Transverse colon (tissue), 4 donors: ENCODE measurements at regions of chr15 and their contacts with region 1.

Region 1: DNA sequence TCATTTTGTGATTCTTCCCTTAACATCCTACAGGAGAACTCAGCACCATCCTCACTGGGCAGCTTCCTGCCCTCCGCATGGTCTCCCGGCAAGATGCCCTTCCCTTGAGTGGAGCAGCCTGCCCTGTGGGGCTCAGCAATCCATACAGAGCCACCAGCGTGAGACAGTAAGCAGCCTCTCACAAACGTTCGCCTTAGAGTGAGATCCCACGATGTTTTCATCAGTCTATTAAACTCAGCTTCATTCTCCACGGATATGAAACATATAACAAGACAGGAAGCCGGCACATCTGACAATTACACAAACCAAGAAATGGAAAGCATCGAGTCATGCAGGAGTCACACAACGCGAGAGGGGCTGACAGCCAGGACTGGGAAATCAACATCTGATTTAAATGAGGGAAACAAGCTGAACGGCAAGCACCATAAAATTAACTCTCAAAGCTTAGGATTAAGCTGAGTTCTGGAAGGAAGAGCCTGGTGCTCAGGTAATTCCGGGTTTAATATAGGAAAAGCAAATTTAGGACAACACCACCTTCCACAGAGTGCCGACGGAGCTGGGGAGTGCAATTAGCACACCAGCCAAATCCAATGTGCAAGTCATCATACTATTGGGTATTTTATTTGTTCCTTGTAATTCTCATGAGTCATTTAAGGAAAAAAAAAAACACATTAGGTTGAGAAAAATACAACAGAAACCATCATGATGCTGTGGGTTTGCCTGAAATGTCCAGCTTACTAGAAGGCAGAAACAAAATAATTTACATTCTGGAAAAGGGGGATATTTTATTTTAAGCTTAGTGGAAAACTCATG is 272.0 kb downstream of the OCA2 start:
- DNase-seq: no peak
- H3K4me3 ChIP-seq: no peak overlapping the region
- H3K27ac ChIP-seq: no peak overlapping the region
- H3K4me1 ChIP-seq: no peaks in the 10 kb centered on the region
- H3K27me3 ChIP-seq: no peaks in the 10 kb centered on the region
- CTCF ChIP-seq: no peak
- EP300 ChIP-seq: no peak
- POLR2A ChIP-seq: no peak

Region 2: GRCh38 chr15:27608248-27608647 is 218.9 kb before region 1 on chr15:
- in situ Hi-C with region 1: no loop called
- intact Hi-C with region 1: no loop called
- DNase-seq: no peak
- H3K4me3 ChIP-seq: no peak overlapping the region
- H3K27ac ChIP-seq: no peak overlapping the region
- H3K4me1 ChIP-seq: no peaks in the 10 kb centered on the region
- H3K27me3 ChIP-seq: no peaks in the 10 kb centered on the region
- CTCF ChIP-seq: no peak
- EP300 ChIP-seq: no peak
- POLR2A ChIP-seq: no peak

Region 3: DNA sequence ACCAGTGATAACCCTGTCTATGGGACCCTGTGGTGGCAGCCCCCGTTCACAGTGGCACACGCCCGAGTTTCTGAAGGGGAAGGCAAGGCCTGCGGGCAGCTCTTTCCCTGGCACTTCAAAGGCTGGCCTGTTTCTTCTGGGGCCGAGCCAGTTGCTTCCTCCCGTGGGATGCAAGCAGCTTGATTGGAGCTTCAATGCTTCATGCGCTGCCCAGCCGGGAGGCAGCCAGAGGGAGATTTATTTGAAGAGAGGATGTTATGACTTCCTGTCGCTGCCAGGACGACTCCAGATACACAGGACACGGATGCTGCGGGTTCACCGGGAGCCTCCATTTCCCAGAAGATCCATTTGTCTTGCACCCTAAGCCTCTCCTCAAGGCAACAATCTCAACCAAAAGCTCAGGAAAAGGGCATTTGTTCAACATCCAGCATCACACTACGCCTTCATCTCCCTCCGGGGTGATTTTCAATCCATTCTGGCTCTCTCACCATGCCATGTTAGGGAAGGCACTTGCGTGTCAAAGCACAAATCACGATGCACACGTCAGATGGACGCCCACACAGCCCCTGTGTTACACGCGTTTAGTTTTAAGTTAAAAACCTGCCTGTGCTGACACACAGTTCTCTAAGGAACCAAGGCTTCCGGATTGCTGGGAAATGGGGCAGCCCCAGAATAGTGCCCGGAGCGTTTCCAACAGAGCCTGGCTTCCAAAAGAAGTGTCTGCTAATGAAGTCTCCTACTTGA is 58.2 kb before region 1 on chr15:
- in situ Hi-C with region 1: no loop called
- intact Hi-C with region 1: loop called (anchors 10 kb)
- DNase-seq: no peak
- H3K4me3 ChIP-seq: no peak overlapping the region
- H3K27ac ChIP-seq: no peak overlapping the region
- H3K4me1 ChIP-seq: no peaks in the 10 kb centered on the region
- H3K27me3 ChIP-seq: no peaks in the 10 kb centered on the region
- CTCF ChIP-seq: no peak
- EP300 ChIP-seq: no peak
- POLR2A ChIP-seq: no peak

Region 4: GRCh38 chr15:28043691-28044091 is 216.6 kb after region 1 on chr15:
- in situ Hi-C with region 1: no loop called
- intact Hi-C with region 1: no loop called
- DNase-seq: no peak
- H3K4me3 ChIP-seq: no peak overlapping the region
- H3K27ac ChIP-seq: no peak overlapping the region
- H3K4me1 ChIP-seq: no peaks in the 10 kb centered on the region
- H3K27me3 ChIP-seq: peaks cover 6% of the 10 kb centered on the region
- CTCF ChIP-seq: no peak
- EP300 ChIP-seq: no peak
- POLR2A ChIP-seq: no peak